Activated naive CD8-positive, alpha-beta T cell treated with anti-CD3 and anti-CD28 coated beads, Interleukin-2, amount 10 ng/mL, durations not matched to agents 7 days and 5 days (primary cell): ENCODE measurements at regions of chr10 and their contacts with region 1.

Region 1: GRCh38 chr10:26437637-26438461 is at the start of gene APBB1IP:
- DNase-seq: peak; percentile 74
- ATAC-seq: peak; percentile 56
- H3K4me3 Mint-ChIP-seq: peak within 1 kb of the TSS; percentile 88
- H3K27ac Mint-ChIP-seq: peak within 1 kb of the TSS; percentile 92
- H3K4me1 Mint-ChIP-seq: peaks cover 38% of the 10 kb centered on the region
- H3K27me3 Mint-ChIP-seq: no peaks in the 10 kb centered on the region
- total RNA-seq, gene APBB1IP: 81.1 to 88.7 TPM

Region 2: GRCh38 chr10:26198119-26198518 is 239.7 kb before region 1 on chr10:
- POLR2A ChIA-PET with region 1: no interaction called
- DNase-seq: no peak
- ATAC-seq: no peak
- H3K4me3 Mint-ChIP-seq: no peak overlapping the region
- H3K27ac Mint-ChIP-seq: no peak overlapping the region
- H3K4me1 Mint-ChIP-seq: peaks cover 7% of the 10 kb centered on the region
- H3K27me3 Mint-ChIP-seq: peaks cover 3% of the 10 kb centered on the region

Region 3: DNA sequence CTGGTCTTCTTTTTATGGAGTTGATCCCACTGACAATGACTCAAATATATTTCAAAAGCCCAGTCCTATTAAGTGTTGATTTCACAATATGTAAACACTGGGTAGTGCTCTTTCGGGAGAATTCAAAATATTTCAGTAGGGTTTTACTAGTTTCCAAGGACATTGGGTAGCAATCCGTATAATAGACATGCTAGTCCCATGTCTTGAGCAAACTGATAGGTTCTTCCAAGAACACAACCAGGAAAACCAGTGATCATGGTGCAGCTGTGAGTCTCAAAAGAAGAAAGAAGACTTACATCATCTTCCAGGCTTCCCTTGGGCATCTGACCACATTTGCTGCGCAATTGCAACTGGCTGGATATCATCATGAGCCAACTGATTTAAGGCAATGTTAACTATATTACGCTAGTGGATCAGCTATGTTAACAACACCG is 59.0 kb before region 1 on chr10:
- POLR2A ChIA-PET with region 1: no interaction called
- DNase-seq: no peak
- ATAC-seq: no peak
- H3K4me3 Mint-ChIP-seq: no peak overlapping the region
- H3K27ac Mint-ChIP-seq: no peak overlapping the region
- H3K4me1 Mint-ChIP-seq: no peaks in the 10 kb centered on the region
- H3K27me3 Mint-ChIP-seq: peaks cover 3% of the 10 kb centered on the region

Region 4: DNA sequence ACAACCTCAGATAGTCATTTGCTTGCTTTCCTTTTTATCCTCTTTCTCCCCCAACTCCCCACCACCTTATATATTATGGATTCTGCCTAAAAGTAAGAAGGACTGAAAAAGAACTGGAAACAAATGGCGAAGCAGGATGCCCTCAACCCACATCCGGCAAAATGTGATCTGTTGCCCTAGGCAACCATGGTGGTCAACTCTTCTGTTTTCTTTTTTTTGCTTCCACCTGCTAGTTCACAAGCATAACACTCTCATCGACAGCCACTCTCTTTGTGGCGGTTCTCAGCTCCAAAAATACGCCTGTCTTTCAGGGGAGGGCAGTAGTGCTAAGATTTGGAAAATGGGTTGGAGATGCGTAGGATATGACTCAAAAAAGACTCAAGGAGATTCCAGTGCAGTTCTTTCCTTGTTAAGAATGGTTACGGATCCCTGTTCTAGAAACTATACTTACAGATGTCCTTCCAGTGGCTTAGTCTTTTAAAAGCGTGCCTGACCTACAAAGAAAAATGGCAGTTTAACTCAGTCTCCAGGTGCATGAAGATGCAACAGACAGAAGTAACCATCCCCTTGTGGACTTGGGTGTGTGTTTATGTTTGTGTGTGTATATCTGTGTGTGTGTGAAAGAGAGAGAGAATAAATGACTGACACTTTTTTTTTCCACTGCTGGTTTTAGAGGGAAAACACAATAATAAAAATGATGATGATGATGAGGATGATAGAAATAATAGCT is 11.0 kb after region 1 on chr10:
- POLR2A ChIA-PET with region 1: interaction called, 19 read pairs
- DNase-seq: peak; percentile 71
- ATAC-seq: peak; percentile 71
- H3K4me3 Mint-ChIP-seq: peak overlapping the region; percentile 75
- H3K27ac Mint-ChIP-seq: peak overlapping the region; percentile 91
- H3K4me1 Mint-ChIP-seq: peaks cover 64% of the 10 kb centered on the region
- H3K27me3 Mint-ChIP-seq: no peaks in the 10 kb centered on the region

Region 5: DNA sequence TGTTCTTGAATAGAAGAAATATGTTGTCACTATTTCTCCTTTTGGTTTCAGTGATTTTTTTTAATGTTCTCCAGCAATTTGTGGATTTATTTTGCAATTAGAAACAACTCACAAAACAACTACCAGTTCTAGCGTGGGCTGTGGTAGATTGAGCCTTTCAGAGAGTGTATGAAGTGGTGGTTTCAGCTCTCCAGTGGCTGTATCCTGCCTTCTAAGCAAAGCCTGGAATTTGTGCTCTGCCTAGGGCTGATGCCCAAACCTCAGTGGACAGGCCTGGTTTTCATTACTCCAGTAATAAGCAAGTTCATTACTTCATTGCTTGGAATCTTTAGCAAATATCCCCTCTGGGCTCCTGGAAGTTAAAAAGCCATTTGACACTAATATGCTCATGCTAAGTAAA is 36.2 kb after region 1 on chr10:
- POLR2A ChIA-PET with region 1: interaction called, 15 read pairs
- DNase-seq: no peak
- ATAC-seq: peak; percentile 31
- H3K4me3 Mint-ChIP-seq: peak overlapping the region; percentile 16
- H3K27ac Mint-ChIP-seq: peak overlapping the region; percentile 91
- H3K4me1 Mint-ChIP-seq: peaks cover 76% of the 10 kb centered on the region
- H3K27me3 Mint-ChIP-seq: no peaks in the 10 kb centered on the region

Region 6: DNA sequence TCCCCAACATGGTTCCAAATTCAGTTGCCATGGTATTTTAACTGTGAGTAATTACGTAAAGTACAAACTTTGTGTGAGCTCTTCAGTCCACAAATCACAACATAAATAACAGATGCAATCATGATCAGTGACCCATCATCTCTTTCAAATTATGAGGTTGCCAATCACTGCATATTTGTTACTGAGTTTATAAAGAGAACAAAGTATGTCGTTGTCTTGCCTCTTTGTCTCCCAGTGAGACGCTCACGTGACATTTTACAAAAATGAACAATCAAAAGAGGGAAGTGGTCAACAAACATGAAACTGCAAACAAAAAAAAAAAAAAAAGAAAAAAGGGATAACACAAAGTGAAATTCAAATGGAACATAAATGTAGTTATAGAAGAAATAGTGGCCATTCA is 136.9 kb after region 1 on chr10:
- POLR2A ChIA-PET with region 1: no interaction called
- DNase-seq: no peak
- ATAC-seq: no peak
- H3K4me3 Mint-ChIP-seq: peak overlapping the region; percentile 12
- H3K27ac Mint-ChIP-seq: peak overlapping the region; percentile 55
- H3K4me1 Mint-ChIP-seq: peaks cover 4% of the 10 kb centered on the region
- H3K27me3 Mint-ChIP-seq: no peaks in the 10 kb centered on the region